Left cardiac atrium (tissue), 4 donors: ENCODE measurements at regions of chr3 and their contacts with region 1.

Region 1: DNA sequence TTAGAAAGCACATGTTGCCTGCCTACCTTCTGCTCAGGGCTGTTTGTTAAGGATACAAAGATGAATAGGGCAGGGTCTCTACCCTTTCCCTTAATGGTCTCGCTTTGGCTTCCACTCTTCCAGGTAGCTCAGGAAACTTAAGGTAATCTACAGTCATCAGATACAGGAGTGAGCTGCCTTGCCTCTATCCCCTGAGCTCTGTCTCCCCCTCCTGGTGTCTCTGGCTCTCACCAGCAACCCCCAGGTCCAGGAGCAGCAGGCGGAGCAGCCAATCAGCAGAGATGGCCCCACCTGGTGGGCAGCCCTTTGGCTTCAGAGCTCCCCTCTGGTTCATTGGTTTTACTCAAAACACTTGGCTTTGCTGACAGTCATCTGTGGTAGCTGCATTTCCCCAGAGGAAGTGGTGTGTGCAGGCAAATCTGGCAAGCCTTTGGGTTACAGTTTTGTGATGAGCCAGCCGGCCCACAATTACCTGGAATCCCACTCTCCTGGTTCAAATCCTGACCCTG is 8.5 kb upstream of the CX3CR1 start:
- DNase-seq: peak; percentile 82
- ATAC-seq: peak; percentile 92 to 96

Region 2: DNA sequence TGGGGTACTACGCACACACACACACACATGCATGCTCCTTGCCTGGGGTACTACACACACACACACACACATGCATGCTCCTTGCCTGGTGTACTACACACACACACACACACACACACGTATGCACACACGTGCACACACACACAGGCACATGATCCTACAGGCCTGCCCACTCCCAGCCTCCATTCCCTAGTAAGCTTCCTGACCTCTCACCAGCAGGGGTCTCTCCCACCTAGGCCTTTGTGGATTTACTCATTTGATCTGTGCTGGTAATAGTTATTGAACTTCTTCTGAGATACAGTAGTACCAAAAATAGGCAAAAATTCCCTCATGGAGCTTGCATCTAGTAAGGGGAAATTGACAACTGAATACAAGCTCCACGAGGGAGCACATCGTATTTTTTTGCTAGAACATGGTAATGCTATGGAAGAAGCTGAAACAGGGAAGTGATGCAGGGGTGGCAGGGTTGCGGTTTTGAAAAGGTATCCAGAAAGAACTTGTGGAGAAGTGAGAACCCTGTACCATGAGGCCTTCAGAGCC is 161.8 kb before region 1 on chr3:
- intact Hi-C with region 1: loop called in 1 of 2 experiments (anchors 1 kb)
- DNase-seq: peak; percentile 47
- ATAC-seq: peak; percentile 70 to 75

Region 3: GRCh38 chr3:39189959-39190269 is 98.4 kb before region 1 on chr3:
- intact Hi-C with region 1: loop called in 1 of 2 experiments (anchors 5 kb)
- DNase-seq: peak; percentile 72
- ATAC-seq: peak; percentile 37 to 41

Region 4: DNA sequence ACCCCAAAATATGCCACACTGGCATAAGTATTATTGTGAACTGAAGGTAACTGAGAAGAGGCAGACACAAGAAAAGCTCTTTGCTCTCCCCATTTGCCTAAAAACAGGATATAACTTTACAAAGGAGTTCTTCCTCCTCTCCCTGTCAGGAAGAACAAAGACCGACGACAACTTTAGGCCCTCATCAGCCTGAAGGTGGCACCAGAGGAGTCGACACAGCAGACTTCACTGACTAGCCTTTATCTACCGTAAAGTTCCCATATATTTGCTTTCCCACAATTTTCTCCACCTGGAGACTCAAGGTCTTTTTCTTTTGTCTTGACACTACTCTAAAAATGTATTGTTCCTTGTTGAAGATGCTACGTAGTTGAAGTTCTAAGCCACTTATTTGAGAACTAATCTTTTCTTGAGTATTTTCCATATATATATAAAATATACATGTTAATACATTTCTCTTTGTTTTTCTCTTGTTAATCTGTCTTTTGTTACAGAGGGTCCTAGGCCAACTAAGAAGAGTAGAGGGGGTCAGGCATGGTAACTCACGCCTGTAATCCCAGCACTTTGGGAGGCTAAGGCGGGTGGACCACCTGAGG is 79.8 kb before region 1 on chr3:
- intact Hi-C with region 1: loop called (anchors 5 kb)
- DNase-seq: no peak
- ATAC-seq: peak; percentile 77 to 81